PC-9 (cell line): ENCODE measurements at regions of chr10 and their contacts with region 1.

Region 1: GRCh38 chr10:92290837-92291615 is at the starts of genes CPEB3 and MARCHF5:
- DNase-seq: peak; percentile 81 to 90
- H3K4me3 ChIP-seq: peak within 1 kb of the TSS; percentile 89
- H3K27ac ChIP-seq: peak within 1 kb of the TSS; percentile 59
- H3K4me1 ChIP-seq: peaks cover 8% of the 10 kb centered on the region
- H3K27me3 ChIP-seq: no peaks in the 10 kb centered on the region
- CTCF ChIP-seq: peak; percentile 57
- total RNA-seq, gene CPEB3: 1.1 and 1.4 TPM in 2 replicates
- total RNA-seq, gene MARCHF5: 31.5 and 39.1 TPM in 2 replicates

Region 2: GRCh38 chr10:92087750-92088395 is 203.2 kb before region 1 on chr10:
- CTCF ChIA-PET with region 1: interaction called, 17 read pairs
- POLR2A ChIA-PET with region 1: no interaction called
- intact Hi-C with region 1: loop called (anchors 1 kb)
- DNase-seq: peak; percentile 67 to 75
- H3K4me3 ChIP-seq: no peak overlapping the region
- H3K27ac ChIP-seq: peak overlapping the region; percentile 36; the same call in 1 of the 2 replicates
- H3K4me1 ChIP-seq: peaks cover 5% of the 10 kb centered on the region; the same call in 1 of the 2 replicates
- H3K27me3 ChIP-seq: no peaks in the 10 kb centered on the region
- CTCF ChIP-seq: peak; percentile 82

Region 3: GRCh38 chr10:92094960-92095359 is 196.1 kb before region 1 on chr10:
- CTCF ChIA-PET with region 1: no interaction called
- POLR2A ChIA-PET with region 1: interaction called, 11 read pairs
- intact Hi-C with region 1: no loop called
- DNase-seq: no peak
- H3K4me3 ChIP-seq: no peak overlapping the region
- H3K27ac ChIP-seq: no peak overlapping the region
- H3K4me1 ChIP-seq: peaks cover 3% of the 10 kb centered on the region; the same call in 1 of the 2 replicates
- H3K27me3 ChIP-seq: no peaks in the 10 kb centered on the region
- CTCF ChIP-seq: no peak

Region 4: DNA sequence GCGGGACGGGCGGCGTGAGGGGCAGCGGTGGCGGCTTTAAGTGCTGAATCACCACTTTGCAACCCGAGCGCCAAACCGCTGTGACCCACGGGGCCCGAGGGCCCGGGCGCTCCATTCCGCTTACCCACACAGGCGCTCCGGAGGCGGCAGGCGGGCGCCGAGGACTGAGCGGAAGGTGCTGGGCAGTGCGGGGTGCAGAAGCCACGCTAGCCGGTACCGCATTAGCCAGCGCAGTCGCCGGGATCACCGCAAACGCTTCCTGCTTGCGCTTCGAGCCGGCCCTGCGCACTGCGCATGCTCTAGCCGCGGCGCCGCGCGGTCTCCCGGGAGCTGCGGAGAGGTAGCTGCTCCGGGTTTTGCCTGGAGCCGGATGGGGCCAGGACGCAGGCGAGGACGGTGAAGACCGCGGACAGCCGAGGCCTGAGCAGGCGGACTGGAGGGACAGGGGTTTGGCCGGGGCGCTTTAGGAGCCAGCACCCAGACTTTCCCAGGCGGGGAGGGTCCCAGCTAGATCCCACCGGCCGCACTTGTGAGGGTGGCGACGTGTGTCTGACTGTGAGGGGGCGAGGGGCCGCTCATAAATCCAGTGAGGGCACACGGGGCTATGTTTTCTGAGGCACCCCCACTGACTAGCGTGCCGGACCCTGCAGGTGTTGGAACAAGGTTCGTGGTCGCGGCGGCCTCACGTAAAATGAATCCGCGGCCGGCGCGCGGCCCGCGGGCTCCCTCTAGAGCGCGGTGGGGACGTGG is 282.9 kb after region 1 on chr10 and contains the start of gene IDE:
- CTCF ChIA-PET with region 1: interaction called, 10 read pairs
- POLR2A ChIA-PET with region 1: no interaction called
- intact Hi-C with region 1: no loop called
- DNase-seq: peak; percentile 58 to 81
- H3K4me3 ChIP-seq: peak within 1 kb of the TSS; percentile 93
- H3K27ac ChIP-seq: peak within 1 kb of the TSS; percentile 83
- H3K4me1 ChIP-seq: peaks cover 28% of the 10 kb centered on the region
- H3K27me3 ChIP-seq: no peaks in the 10 kb centered on the region
- CTCF ChIP-seq: peak; percentile 63
- total RNA-seq, gene IDE: 26.5 and 41.2 TPM in 2 replicates